Sciatic nerve (tissue), 2 donors: ENCODE measurements at regions of chr2 and their contacts with region 1.

Region 1: DNA sequence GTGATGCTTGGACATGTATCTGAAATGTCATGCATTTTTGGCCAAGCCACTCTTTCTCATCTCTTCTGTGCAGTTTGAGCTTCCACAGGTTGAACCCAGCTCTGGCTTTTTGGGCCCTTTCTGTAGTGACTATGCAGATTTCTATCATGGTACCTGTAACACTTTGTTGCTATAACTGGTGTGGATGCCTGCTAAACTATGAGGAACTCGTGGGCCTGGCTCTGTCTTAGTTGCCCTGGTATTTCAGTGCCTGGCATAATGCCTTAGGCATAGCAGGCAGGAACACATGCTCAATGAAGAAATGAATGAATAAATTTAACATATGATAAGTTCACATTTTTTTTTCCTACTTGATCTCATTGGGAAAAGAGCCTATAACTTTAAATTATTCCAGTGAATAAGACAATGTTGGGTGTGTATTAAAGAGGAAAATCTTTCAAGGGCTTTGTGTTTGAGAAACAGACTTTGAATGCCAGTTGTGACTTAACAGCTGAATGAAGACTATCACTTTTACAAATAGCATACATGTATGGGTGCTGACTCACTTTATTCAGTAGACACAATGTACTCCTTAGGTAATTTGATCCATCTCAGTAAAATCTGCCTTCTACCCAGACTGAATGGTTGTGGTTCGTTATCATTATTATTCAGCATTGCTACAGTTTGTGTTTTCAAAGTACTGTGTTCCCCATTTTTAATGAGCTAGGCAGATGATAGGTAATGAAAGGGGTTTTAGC is 86.4 kb upstream of the MAP4K3 start:
- DNase-seq: no peak
- ATAC-seq: no peak

Region 2: GRCh38 chr2:38438883-38439612 is 1084.4 kb before region 1 on chr2:
- intact Hi-C with region 1: loop called (anchors 5 kb)
- DNase-seq: no peak
- ATAC-seq: no peak